ENCODE measurements at regions of chr7 and their contacts with region 1.

Region 1: DNA sequence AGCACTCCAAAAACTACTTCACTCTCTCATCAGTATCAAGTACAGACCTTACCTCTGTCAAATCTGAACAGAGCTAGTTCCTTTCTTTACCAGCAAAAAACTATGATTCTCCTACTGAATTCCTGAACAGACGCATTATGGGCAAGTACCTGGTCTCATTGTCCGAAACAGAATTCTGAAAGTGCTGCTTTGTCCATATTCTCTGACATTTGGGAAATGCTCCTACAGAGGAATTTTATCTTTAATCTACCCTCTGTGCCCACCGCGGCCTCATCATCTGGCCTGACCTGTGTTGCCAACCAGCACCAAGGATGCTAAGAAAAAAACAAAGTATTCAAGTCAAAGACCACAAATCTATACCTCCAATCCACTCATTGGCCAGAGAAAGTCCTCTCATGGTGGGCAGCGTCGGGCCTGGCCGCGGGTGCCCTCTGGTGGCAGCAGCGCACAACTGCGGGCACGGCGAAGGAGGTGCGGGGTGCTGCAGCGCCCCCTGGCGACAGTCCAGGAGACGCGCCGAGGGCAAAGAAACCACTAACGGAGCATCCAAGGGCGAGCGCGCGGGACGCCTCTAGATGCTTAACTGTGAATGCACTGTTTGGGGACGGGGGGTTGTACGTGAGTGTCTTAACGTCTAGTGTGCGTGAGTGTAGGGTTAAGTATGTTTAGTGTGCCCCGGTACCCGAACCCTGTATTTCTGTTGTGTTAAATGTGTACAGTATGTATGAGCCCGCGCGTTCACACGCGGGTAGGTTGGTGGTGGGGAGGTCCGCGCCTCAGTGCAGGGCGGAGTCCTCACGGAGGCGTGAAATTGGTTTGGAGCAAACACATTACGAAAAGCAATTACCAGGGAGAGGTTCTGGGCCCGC is 5.0 kb upstream of the GBX1 start:
- DNase-seq: peak; percentile 54
- ATAC-seq: peak; percentile 78
- H3K4me3 ChIP-seq: no peak overlapping the region
- H3K27ac ChIP-seq: no peak overlapping the region
- H3K4me1 ChIP-seq: no peaks in the 10 kb centered on the region
- H3K27me3 ChIP-seq: peaks cover 21% of the 10 kb centered on the region
- CTCF ChIP-seq: peak; percentile 100

Region 2: DNA sequence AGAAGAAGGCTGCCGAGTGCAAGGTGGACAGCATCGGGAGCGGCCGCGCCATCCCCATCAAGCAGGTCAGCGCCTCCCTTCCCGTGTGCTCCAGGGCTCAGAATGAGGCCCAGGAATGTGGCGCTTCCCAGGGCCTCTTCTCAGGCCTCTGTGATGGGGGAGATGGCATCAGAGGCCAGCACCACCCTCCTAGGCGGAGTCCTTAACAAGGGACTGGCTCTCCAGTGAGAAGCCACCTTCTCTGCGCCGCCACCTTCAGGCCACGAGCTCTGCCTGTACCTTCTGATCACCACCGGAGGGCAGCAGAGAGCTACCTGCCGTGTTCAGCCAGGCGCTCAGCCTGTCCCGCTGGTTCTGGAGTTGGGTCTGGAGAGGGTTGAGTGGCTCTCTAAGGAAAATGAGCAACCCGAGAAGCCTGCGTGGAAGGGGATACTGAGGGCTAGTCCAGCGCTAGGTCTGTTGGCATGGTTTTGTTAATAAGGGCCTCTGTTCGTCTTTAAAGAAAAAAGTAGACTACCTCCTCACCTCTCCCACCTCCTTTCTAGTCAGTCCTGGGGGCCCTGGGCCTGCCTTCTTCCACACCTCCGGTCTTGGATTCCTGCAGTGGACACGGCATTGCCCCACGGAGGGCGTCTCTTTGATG is 48.6 kb before region 1 on chr7:
- CTCF ChIA-PET with region 1: interaction called, 6 read pairs
- POLR2A ChIA-PET with region 1: no interaction called
- in situ Hi-C with region 1: no loop called
- intact Hi-C with region 1: loop called (anchors 1 kb)
- DNase-seq: peak; percentile 78
- ATAC-seq: peak; percentile 94
- H3K4me3 ChIP-seq: no peak overlapping the region
- H3K27ac ChIP-seq: no peak overlapping the region
- H3K4me1 ChIP-seq: no peaks in the 10 kb centered on the region
- H3K27me3 ChIP-seq: no peaks in the 10 kb centered on the region
- CTCF ChIP-seq: peak; percentile 99

Region 3: DNA sequence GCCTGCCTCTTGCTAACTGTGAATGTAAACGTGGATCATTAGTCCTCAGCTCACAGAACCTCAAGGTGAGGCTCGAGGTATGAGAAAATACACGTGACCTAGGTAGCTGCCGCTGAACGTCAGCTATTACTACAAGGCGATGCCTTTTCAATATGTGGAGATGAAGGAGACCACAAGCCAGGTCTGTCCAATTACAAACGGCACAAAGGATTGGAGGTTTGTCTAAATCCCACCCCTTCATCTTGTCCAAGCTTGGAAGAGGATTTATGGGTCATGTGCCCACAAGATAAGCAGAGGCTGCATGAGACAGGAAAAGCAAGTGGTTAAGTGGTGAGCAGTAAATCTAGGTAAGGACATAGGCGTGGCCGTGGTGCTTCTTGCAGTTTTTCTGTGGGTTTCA is 34.4 kb after region 1 on chr7:
- CTCF ChIA-PET with region 1: interaction called, 3 read pairs
- POLR2A ChIA-PET with region 1: no interaction called
- in situ Hi-C with region 1: loop called (anchors 5 kb)
- intact Hi-C with region 1: no loop called
- DNase-seq: no peak
- ATAC-seq: no peak
- H3K4me3 ChIP-seq: no peak overlapping the region
- H3K27ac ChIP-seq: no peak overlapping the region
- H3K4me1 ChIP-seq: no peaks in the 10 kb centered on the region
- H3K27me3 ChIP-seq: no peaks in the 10 kb centered on the region
- CTCF ChIP-seq: no peak